Prostate gland (tissue), 2 donors: ENCODE measurements at regions of chr3 and their contacts with region 1.

Region 1: GRCh38 chr3:45043728-45044299 is 17.7 kb downstream of the CLEC3B start:
- DNase-seq: no peak
- H3K4me3 ChIP-seq: no peak overlapping the region
- H3K27ac ChIP-seq: no peak overlapping the region
- H3K4me1 ChIP-seq: no peaks in the 10 kb centered on the region
- H3K27me3 ChIP-seq: no peaks in the 10 kb centered on the region
- CTCF ChIP-seq: peak in 1 of 4 experiments; percentile 34
- POLR2A ChIP-seq: no peak

Region 2: GRCh38 chr3:45123030-45123429 is 79.2 kb after region 1 on chr3:
- intact Hi-C with region 1: no loop called
- DNase-seq: no peak
- H3K4me3 ChIP-seq: no peak overlapping the region
- H3K27ac ChIP-seq: no peak overlapping the region
- H3K4me1 ChIP-seq: no peaks in the 10 kb centered on the region
- H3K27me3 ChIP-seq: no peaks in the 10 kb centered on the region
- CTCF ChIP-seq: no peak
- POLR2A ChIP-seq: no peak

Region 3: DNA sequence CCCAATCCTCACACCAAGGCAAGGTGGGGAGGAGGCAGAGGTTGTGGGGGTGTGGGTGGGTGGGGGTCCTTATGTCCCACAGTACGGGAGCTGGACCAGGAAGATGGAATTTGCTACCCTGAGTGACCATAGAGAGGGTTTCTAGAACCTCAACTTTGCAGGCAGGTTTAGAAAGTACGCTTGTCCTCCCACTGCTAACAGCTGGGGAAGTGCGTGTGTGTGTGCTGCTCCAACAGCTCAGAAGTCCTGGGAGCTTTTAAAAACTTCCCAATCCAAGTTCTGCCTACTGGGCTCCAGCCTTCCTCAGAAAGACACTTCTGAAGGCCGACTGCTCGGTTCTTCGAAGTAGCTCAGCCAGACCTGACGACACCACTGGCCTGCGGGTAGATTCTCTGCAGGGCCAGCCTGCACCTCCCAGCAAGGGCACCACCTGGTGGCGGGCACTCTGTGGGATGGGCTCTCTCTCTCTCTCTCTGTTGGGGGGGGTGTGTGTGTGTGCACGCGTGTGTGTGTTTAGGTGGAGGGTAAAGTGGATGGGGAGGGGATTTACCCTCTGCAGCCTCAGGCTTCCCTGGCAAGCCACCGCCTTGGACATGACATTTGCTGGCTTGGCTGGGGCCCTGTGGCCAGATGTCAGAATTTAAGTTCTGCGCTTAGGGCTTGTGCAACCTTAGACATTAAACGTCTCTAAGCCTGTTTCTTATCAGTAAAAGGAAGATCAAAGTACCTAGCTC is 166.7 kb after region 1 on chr3:
- intact Hi-C with region 1: loop called (anchors 2 kb)
- DNase-seq: peak; percentile 83
- H3K4me3 ChIP-seq: no peak overlapping the region
- H3K27ac ChIP-seq: no peak overlapping the region
- H3K4me1 ChIP-seq: no peaks in the 10 kb centered on the region
- H3K27me3 ChIP-seq: no peaks in the 10 kb centered on the region
- CTCF ChIP-seq: peak; percentile 56 to 96 (median 92)
- POLR2A ChIP-seq: no peak

Region 4: GRCh38 chr3:45499529-45499928 is 455.7 kb after region 1 on chr3:
- intact Hi-C with region 1: loop called (anchors 2 kb)
- DNase-seq: no peak
- H3K4me3 ChIP-seq: no peak overlapping the region
- H3K27ac ChIP-seq: no peak overlapping the region
- H3K4me1 ChIP-seq: no peaks in the 10 kb centered on the region
- H3K27me3 ChIP-seq: no peaks in the 10 kb centered on the region
- CTCF ChIP-seq: peak; percentile 33 to 70 (median 54)
- POLR2A ChIP-seq: no peak